A673 (cell line): ENCODE measurements at regions of chr18 and their contacts with region 1.

Region 1: GRCh38 chr18:22933206-22933957 is at the start of gene RBBP8:
- DNase-seq: peak; percentile 92
- H3K4me3 ChIP-seq: peak within 1 kb of the TSS; percentile 88
- H3K27ac ChIP-seq: peak within 1 kb of the TSS; percentile 98
- H3K4me1 ChIP-seq: peaks cover 12% of the 10 kb centered on the region
- H3K27me3 ChIP-seq: no peaks in the 10 kb centered on the region
- CTCF ChIP-seq: no peak
- total RNA-seq, gene RBBP8: 75.8 and 88.2 TPM in 2 replicates

Region 2: DNA sequence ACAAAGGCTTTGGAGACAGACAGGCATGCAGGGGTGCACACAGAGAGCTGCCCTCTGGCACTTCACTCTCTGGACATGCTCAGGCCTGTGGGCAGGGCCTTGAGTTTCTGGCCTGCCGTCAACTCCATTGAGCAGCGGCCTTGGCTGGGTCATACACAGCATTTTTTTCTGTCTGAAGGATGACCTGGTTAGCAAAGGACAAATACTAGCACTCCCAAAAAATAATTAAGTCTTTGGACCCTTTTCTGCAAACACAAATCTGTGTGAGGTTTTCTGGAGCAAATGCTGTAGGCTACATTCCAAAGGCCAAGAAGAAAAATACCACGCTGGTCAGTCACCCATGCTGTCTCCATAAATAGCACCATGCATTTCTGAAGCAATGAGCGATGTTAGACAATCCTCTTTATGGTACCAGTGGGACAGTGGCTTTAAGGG is 391.0 kb before region 1 on chr18:
- CTCF ChIA-PET with region 1: no interaction called
- POLR2A ChIA-PET with region 1: no interaction called
- intact Hi-C with region 1: no loop called
- DNase-seq: no peak
- H3K4me3 ChIP-seq: no peak overlapping the region
- H3K27ac ChIP-seq: no peak overlapping the region
- H3K4me1 ChIP-seq: no peaks in the 10 kb centered on the region
- H3K27me3 ChIP-seq: peaks cover 18% of the 10 kb centered on the region
- CTCF ChIP-seq: no peak

Region 3: GRCh38 chr18:22822024-22822423 is 111.4 kb before region 1 on chr18:
- CTCF ChIA-PET with region 1: no interaction called
- POLR2A ChIA-PET with region 1: no interaction called
- intact Hi-C with region 1: loop called (anchors 5 kb)
- DNase-seq: peak; percentile 97
- H3K4me3 ChIP-seq: peak overlapping the region; percentile 10
- H3K27ac ChIP-seq: peak overlapping the region; percentile 28
- H3K4me1 ChIP-seq: peaks cover 20% of the 10 kb centered on the region
- H3K27me3 ChIP-seq: no peaks in the 10 kb centered on the region
- CTCF ChIP-seq: no peak

Region 4: DNA sequence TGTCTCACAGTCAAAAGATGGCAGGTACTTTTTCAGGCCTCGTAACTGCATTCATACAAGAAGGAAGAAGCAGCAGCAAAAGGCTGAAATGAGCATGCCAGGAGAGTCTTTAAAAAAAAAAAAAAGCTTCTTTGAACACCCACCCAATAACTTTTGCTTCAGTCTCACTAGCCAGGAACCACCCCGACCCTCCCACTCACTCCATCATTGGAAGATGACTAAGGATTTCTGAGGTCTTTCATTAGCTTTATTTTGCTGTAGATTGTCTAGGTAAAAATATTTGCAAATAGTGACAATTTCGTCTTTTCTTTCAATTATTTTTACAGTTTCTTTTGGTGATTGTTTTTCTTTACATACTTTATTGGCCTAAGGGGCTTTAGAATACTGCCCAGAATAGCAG is 37.7 kb after region 1 on chr18:
- CTCF ChIA-PET with region 1: no interaction called
- POLR2A ChIA-PET with region 1: no interaction called
- intact Hi-C with region 1: no loop called
- DNase-seq: peak; percentile 8
- H3K4me3 ChIP-seq: no peak overlapping the region
- H3K27ac ChIP-seq: no peak overlapping the region
- H3K4me1 ChIP-seq: peaks cover 8% of the 10 kb centered on the region
- H3K27me3 ChIP-seq: no peaks in the 10 kb centered on the region
- CTCF ChIP-seq: no peak

Region 5: GRCh38 chr18:23924813-23925212 is 991.4 kb after region 1 on chr18:
- CTCF ChIA-PET with region 1: no interaction called
- POLR2A ChIA-PET with region 1: no interaction called
- intact Hi-C with region 1: no loop called
- DNase-seq: peak; percentile 22
- H3K4me3 ChIP-seq: no peak overlapping the region
- H3K27ac ChIP-seq: no peak overlapping the region
- H3K4me1 ChIP-seq: peaks cover 4% of the 10 kb centered on the region
- H3K27me3 ChIP-seq: no peaks in the 10 kb centered on the region
- CTCF ChIP-seq: no peak